Mammary epithelial cell (primary cell): ENCODE measurements at regions of chr15 and their contacts with region 1.

Region 1: DNA sequence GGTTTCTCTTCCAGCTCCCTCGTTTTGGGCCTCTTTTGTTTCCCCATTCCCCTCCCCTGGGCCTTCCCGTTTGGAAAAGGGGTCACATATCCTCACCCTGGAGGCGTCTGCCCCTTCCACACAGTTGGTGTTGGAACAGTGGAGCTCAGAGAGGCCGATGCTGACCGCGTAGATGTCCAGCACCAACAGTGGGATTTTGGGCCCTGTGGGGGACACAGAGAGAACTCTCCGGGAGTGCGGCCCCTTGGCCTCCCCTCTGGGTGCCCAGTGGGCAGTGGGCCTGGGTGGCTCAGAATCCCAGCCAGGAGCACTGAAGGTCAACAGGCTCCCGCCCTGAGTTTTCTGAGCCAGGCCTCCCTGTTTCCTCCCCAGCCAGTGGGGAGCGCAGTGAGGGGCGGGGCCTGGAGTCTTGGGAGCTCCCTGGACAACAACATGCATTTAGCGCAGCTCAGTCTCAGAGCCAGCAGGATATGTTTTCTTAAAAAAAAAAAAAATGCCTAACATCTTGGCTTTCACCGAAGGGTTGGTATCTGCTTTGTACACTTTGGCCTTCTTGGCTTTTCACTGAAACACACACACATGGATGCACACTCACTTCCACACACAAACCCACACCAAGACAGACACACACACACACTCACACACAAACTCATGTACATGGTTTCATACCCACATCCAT is 670 bp upstream of the ISLR start:
- DNase-seq: no peak
- H3K4me3 ChIP-seq: no peak overlapping the region
- H3K27ac ChIP-seq: no peak overlapping the region
- H3K4me1 ChIP-seq: no peaks in the 10 kb centered on the region
- H3K27me3 ChIP-seq: no peaks in the 10 kb centered on the region
- CTCF ChIP-seq: no peak

Region 2: GRCh38 chr15:73964736-73965093 is 208.1 kb before region 1 on chr15:
- CTCF ChIA-PET with region 1: no interaction called
- dilution Hi-C with region 1: no loop called
- in situ Hi-C with region 1: no loop called
- intact Hi-C with region 1: no loop called
- DNase-seq: peak; percentile 64
- H3K4me3 ChIP-seq: no peak overlapping the region
- H3K27ac ChIP-seq: no peak overlapping the region
- H3K4me1 ChIP-seq: peaks cover 24% of the 10 kb centered on the region
- H3K27me3 ChIP-seq: no peaks in the 10 kb centered on the region
- CTCF ChIP-seq: peak; percentile 97

Region 3: DNA sequence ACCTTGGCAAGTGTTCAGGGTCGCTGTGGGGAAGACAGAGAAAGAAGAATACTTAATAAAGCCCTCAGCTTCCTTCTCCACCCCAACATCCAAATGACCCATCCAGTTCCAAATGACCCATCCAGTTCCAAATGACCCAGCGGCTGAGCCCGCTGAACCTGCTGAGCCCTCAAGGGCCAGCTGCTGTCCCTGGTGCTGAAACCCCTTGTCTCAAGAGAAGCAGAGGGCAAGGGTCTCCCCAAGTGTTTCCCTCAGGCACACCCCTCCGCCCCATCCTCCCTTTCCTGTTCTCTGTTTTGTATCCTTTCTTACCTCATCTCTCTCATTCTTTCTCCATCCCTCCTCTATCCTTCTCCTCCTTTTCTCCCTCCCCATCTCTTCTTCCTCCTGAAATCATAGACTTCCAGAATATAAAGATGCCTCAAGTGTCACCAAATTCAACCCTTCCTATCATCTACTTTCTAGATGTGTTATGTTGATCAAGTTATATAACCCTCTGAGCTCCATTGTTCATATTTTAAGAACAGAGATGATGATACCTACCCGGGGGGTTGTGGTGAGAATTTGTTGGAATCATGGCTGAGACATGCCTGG is 92.3 kb after region 1 on chr15:
- CTCF ChIA-PET with region 1: no interaction called
- dilution Hi-C with region 1: loop called (anchors 5 kb)
- in situ Hi-C with region 1: no loop called
- intact Hi-C with region 1: no loop called
- DNase-seq: no peak
- H3K4me3 ChIP-seq: no peak overlapping the region
- H3K27ac ChIP-seq: no peak overlapping the region
- H3K4me1 ChIP-seq: no peaks in the 10 kb centered on the region
- H3K27me3 ChIP-seq: no peaks in the 10 kb centered on the region
- CTCF ChIP-seq: no peak

Region 4: DNA sequence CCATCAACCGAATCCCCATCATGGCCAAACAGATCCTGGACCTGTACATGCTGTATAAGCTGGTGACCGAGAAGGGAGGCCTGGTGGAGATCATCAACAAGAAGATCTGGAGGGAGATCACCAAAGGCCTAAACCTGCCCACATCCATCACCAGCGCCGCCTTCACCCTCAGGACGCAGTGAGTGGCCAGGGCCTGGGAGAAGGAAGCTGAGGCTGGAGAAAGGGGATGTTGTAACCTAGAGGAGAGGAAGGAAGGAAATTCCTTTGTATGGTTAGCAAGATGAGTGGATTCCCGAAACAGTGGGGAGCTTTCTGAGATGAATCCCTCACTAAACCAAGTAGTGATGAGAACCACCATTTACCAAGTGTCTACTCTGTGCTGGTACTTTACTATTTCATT is 417.0 kb after region 1 on chr15:
- CTCF ChIA-PET with region 1: no interaction called
- dilution Hi-C with region 1: no loop called
- in situ Hi-C with region 1: no loop called
- intact Hi-C with region 1: no loop called
- DNase-seq: no peak
- H3K4me3 ChIP-seq: no peak overlapping the region
- H3K27ac ChIP-seq: peak overlapping the region; percentile 60
- H3K4me1 ChIP-seq: peaks cover 18% of the 10 kb centered on the region
- H3K27me3 ChIP-seq: no peaks in the 10 kb centered on the region
- CTCF ChIP-seq: no peak